Dorsolateral prefrontal cortex (tissue), 120 donors: ENCODE measurements at regions of chr5 and their contacts with region 1.

Region 1: GRCh38 chr5:125057912-125058826 is 311.7 kb upstream of the ZNF608 start:
- DNase-seq: no peak
- H3K4me3 ChIP-seq: peak overlapping the region in 1 of 59 donors; percentile 15
- H3K27ac ChIP-seq: no peak overlapping the region
- H3K27me3 ChIP-seq: no peaks in the 10 kb centered on the region
- CTCF ChIP-seq: no peak

Region 2: DNA sequence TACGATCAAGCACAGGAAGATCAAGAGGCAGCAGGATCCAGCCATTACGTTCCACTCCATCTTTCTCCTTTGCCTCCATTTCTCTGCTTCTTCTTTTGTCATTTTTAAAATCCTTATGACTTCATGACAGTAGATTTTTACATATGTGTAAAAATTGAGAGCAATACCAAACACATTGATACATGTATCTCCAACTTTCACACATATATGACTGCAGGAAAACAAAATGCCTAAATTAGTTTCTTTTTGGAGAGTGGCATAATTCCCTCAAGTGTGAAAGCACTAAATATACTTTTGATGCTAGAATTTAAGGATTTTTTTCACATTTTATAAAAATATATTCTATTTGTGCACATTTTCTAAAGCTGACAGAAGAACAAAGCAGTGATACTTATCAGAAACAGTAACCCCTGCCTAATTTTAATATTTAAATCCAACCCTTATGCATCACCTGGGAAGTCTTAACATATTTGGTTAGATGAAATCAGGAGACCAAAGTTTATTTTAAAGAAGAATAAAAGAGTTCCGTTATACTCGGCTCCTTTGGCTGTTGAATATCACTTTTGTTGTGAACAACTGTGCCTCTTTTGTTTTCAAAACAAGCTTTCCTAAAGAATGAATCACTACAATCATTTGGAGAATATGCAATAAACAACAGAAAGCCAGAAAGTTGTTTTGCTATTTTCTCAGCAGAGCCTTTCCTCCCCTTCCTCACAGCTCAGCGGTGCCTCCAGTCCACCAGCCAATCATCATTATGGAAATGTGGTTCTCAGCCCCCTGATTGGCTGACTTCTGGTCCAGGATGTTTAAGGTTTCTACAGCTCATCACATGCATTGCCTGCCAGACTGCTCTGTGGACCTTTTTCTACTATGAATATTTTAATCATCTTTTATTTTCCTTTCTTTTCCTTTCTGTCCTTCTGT is 302.9 kb before region 1 on chr5:
- intact Hi-C with region 1: loop called in 1 of 2 experiments (anchors 10 kb)
- DNase-seq: peak in 7 of 10 donors; percentile 41 to 75 (median 60)
- H3K4me3 ChIP-seq: peak overlapping the region in 55 of 59 donors; percentile 0 to 59 (median 33)
- H3K27ac ChIP-seq: peak overlapping the region; percentile 33 to 98 (median 80)
- H3K27me3 ChIP-seq: no peaks in the 10 kb centered on the region
- CTCF ChIP-seq: peak in 3 of 56 donors; percentile 2 to 16 (median 8)

Region 3: GRCh38 chr5:124912638-124913328 is 145.4 kb before region 1 on chr5:
- intact Hi-C with region 1: loop called in 1 of 2 experiments (anchors 10 kb)
- DNase-seq: no peak
- H3K4me3 ChIP-seq: no peak overlapping the region
- H3K27ac ChIP-seq: peak overlapping the region in 9 of 59 donors; percentile 8 to 58 (median 27)
- H3K27me3 ChIP-seq: no peaks in the 10 kb centered on the region
- CTCF ChIP-seq: no peak

Region 4: DNA sequence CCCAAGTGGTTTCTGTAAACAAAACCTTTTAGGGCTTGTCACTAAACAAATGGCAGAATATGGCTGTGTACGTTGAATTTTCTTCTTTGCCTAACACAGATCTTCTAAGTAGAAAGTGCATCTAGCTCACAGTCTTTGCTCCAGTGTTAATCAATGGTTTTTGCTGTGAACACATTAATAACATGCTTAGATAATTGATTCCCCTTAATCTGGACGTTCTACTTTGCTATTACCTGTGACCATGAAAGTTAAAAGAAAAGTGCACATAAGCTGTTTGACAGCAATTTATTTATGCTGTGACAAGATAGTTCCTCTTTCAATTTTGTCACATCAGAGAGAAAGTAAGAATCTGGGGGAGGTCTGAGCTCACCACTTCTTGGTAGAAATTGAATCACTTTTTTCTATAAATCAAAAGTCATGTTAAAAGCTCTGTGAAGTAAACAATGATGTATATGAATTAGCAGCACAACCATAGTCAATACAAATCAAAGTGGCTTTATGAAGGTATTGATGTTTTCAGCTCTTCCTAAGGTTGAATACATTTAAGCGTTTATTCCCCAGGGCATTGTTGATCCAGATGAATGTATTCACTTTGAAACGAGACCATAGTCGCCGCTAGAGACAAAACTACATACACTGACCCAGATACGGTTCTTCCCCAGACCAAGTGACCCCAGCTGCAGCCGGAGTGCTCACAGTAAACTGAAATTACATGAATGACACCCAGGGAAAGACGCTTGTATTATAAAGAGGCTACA is 137.1 kb before region 1 on chr5:
- intact Hi-C with region 1: loop called (anchors 10 kb)
- DNase-seq: no peak
- H3K4me3 ChIP-seq: peak overlapping the region in 7 of 59 donors; percentile 2 to 17 (median 8)
- H3K27ac ChIP-seq: peak overlapping the region in 58 of 59 donors; percentile 3 to 96 (median 88)
- H3K27me3 ChIP-seq: no peaks in the 10 kb centered on the region
- CTCF ChIP-seq: peak in 3 of 56 donors; percentile 13 to 21 (median 14)